Adrenal gland (tissue), 19 donors: ENCODE measurements at regions of chr11 and their contacts with region 1.

Region 1: GRCh38 chr11:13280092-13280722 is 2.6 kb downstream of the BMAL1 start:
- DNase-seq: no peak
- H3K4me3 ChIP-seq: no peak overlapping the region
- H3K27ac ChIP-seq: no peak overlapping the region
- H3K4me1 ChIP-seq: peaks cover 15 to 41% of the 10 kb centered on the region in 2 donors
- H3K27me3 ChIP-seq: no peaks in the 10 kb centered on the region
- CTCF ChIP-seq: no peak
- POLR2A ChIP-seq: no peak

Region 2: DNA sequence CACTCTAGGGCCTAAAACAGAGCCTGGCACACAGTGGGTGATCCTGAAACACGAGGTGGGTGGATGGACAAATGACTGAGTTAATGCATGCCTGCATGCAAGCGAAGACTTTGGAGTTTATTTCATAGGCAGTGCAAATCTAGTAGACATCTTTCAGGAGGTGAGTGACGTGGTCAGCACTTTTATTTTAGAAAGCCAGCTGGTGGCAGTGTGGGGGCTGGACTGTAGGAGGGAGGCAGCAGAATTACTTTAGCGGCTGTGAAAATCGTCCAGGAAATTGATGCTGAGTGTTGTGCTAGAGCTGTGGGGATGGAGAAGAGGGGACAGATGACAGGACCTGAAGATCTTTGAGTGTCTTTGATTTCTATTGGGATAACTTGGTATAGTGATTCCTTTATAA is 44.5 kb after region 1 on chr11:
- intact Hi-C with region 1: loop called in 1 of 2 experiments (anchors 5 kb)
- DNase-seq: no peak
- H3K4me3 ChIP-seq: no peak overlapping the region
- H3K27ac ChIP-seq: no peak overlapping the region
- H3K4me1 ChIP-seq: peaks cover 5 to 6% of the 10 kb centered on the region in 2 donors
- H3K27me3 ChIP-seq: no peaks in the 10 kb centered on the region
- CTCF ChIP-seq: no peak
- POLR2A ChIP-seq: no peak

Region 3: GRCh38 chr11:13333456-13333957 is 53.3 kb after region 1 on chr11:
- intact Hi-C with region 1: loop called in 1 of 2 experiments (anchors 5 kb)
- DNase-seq: no peak
- H3K4me3 ChIP-seq: no peak overlapping the region
- H3K27ac ChIP-seq: peak overlapping the region in 1 of 5 donors; percentile 8
- H3K4me1 ChIP-seq: peaks cover 34 to 46% of the 10 kb centered on the region in 2 donors
- H3K27me3 ChIP-seq: no peaks in the 10 kb centered on the region
- CTCF ChIP-seq: no peak
- POLR2A ChIP-seq: no peak

Region 4: DNA sequence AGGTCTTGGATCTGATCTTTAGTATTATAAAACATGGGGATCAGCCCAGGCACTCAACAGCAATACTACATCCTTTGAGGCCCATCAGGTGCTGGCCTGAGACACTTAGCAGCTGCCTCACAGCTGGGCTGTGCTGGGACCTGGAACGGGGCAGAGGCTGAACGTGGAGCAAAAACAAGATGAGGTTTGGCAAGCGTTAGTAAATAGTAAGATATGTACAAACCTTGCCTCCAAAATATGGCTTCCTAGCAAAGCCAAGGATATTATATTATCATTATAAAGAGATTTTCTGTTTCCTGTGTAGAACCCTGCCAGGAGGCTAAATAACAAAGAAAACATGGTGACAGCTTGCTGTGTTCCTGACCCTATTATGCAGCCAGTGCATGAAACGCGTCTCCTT is 622.3 kb after region 1 on chr11:
- intact Hi-C with region 1: no loop called
- DNase-seq: no peak
- H3K4me3 ChIP-seq: no peak overlapping the region
- H3K27ac ChIP-seq: no peak overlapping the region
- H3K4me1 ChIP-seq: no peaks in the 10 kb centered on the region
- H3K27me3 ChIP-seq: no peaks in the 10 kb centered on the region
- CTCF ChIP-seq: no peak
- POLR2A ChIP-seq: no peak